Mammary epithelial cell (primary cell): ENCODE measurements at regions of chr5 and their contacts with region 1.

Region 1: DNA sequence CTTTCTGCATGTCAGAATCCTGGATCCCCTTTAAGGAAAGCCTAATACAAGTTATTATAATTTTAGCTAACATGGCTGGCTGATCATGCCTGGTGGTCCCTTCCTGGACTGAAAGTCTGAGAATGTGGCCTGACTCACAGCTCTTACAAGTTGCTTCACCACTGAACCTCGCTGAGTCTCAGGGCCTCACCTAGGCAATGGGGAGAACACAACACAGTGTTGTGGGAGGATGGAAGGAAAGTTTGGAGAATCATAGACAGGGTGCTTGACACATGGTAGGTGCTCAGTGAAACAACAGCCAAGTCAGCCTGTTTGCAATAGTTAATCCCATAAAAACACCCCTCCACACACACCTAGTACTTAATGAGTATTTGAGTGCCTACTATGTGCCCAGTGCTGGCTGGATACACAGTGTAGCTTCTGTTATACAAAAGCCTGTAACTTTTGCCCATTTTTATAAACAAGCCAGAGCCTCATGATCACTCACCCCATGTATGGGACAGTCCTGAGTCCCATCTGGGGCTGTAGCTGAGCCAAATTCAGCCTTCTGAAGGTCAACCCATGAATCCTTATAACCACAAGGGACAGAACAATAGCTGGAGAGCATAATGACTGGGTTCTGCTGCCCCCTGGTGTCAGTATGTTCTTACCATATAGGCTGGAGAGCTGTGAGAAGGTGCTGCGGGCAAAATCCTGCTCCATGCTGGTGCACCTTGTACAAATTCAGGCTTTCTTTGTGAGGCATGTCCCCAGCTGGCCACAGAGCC is 3.9 kb downstream of the ACSL6 start:
- DNase-seq: peak; percentile 71
- H3K4me3 ChIP-seq: no peak overlapping the region
- H3K27ac ChIP-seq: no peak overlapping the region
- H3K4me1 ChIP-seq: peaks cover 17% of the 10 kb centered on the region
- H3K27me3 ChIP-seq: peaks cover 7% of the 10 kb centered on the region
- CTCF ChIP-seq: peak; percentile 71 to 80

Region 2: GRCh38 chr5:131423056-131423455 is 584.5 kb before region 1 on chr5:
- CTCF ChIA-PET with region 1: interaction called, 5 read pairs
- dilution Hi-C with region 1: no loop called
- in situ Hi-C with region 1: no loop called
- intact Hi-C with region 1: loop called (anchors 1 kb)
- DNase-seq: no peak
- H3K4me3 ChIP-seq: no peak overlapping the region
- H3K27ac ChIP-seq: no peak overlapping the region
- H3K4me1 ChIP-seq: no peaks in the 10 kb centered on the region
- H3K27me3 ChIP-seq: no peaks in the 10 kb centered on the region
- CTCF ChIP-seq: peak; percentile 26 to 33

Region 3: DNA sequence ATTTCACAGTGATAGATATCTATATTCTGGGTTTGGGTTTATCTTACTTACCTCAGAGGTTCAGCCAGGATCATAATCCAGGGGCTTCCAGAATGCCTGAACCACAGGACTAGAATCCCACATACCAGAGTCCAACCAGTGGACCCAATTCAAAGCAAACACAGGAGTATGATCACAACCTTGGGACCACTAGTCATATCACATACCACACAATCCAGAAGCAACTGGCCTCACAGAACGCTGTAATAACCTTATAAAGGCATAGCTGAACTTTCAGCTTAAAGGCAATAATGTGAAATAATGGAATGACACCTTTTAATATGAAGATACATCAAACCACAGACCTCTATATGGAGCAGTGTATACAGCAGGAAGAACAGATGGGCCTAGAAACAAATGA is 397.8 kb before region 1 on chr5:
- CTCF ChIA-PET with region 1: no interaction called
- dilution Hi-C with region 1: no loop called
- in situ Hi-C with region 1: loop called in 1 of 2 experiments (anchors 5 kb)
- intact Hi-C with region 1: no loop called
- DNase-seq: no peak
- H3K4me3 ChIP-seq: no peak overlapping the region
- H3K27ac ChIP-seq: no peak overlapping the region
- H3K4me1 ChIP-seq: peaks cover 17% of the 10 kb centered on the region
- H3K27me3 ChIP-seq: no peaks in the 10 kb centered on the region
- CTCF ChIP-seq: no peak

Region 4: GRCh38 chr5:131710391-131710790 is 297.2 kb before region 1 on chr5:
- CTCF ChIA-PET with region 1: no interaction called
- dilution Hi-C with region 1: no loop called
- in situ Hi-C with region 1: no loop called
- intact Hi-C with region 1: loop called (anchors 10 kb)
- DNase-seq: no peak
- H3K4me3 ChIP-seq: no peak overlapping the region
- H3K27ac ChIP-seq: no peak overlapping the region
- H3K4me1 ChIP-seq: no peaks in the 10 kb centered on the region
- H3K27me3 ChIP-seq: no peaks in the 10 kb centered on the region
- CTCF ChIP-seq: no peak

Region 5: DNA sequence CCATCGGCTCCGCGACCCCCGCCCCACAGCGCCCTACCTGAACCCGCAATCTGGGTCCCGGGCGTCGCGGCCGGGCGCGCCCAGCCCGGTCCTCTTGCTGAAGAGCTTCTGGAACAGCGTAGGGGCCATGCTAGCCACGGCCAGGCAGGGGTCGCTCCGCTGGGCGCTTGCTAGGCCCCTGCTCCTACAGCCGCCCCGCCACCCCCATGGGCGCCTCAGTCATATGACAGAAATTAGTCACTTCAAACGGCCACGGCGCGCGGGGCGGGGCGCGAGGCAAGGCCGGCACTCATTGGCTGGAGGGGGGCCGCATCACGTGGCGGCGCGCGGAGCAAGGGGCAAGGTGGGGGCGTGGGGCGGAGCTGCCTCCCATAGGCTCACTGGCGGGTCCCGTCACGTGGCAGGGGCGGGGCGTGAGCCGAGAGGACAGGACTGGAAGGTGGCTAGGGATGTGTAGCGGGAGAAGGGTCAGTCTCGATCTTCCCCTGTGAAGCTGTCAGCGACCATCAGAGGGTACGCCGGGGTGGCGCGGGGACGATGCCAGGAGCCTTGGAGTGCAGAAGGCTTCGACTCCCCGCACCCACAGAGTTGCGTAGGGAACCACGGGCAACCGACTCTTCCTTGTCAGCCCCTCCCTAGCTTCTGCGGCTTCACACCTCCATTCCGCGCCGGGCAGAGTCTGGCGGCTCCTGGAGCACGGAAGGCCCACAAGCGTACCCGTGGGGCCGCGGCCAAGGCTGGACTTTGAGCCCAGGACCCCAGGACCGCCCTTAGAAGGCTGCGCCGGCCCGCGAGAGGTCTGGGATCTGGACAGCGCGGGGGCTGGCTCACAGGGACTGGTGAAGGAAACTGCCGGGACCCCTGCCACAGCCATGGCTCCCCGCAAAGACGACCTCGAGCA is 210.5 kb before region 1 on chr5 and contains the start of gene FNIP1:
- CTCF ChIA-PET with region 1: no interaction called
- dilution Hi-C with region 1: no loop called
- in situ Hi-C with region 1: loop called in 1 of 2 experiments (anchors 25 kb)
- intact Hi-C with region 1: loop called (anchors 5 kb)
- DNase-seq: peak; percentile 97
- H3K4me3 ChIP-seq: peak within 1 kb of the TSS; percentile 93 to 97 (median 94)
- H3K27ac ChIP-seq: peak within 1 kb of the TSS; percentile 91
- H3K4me1 ChIP-seq: peaks cover 13% of the 10 kb centered on the region
- H3K27me3 ChIP-seq: no peaks in the 10 kb centered on the region
- CTCF ChIP-seq: no peak
- total RNA-seq, gene FNIP1: 27.3 to 69.2 TPM

Region 6: DNA sequence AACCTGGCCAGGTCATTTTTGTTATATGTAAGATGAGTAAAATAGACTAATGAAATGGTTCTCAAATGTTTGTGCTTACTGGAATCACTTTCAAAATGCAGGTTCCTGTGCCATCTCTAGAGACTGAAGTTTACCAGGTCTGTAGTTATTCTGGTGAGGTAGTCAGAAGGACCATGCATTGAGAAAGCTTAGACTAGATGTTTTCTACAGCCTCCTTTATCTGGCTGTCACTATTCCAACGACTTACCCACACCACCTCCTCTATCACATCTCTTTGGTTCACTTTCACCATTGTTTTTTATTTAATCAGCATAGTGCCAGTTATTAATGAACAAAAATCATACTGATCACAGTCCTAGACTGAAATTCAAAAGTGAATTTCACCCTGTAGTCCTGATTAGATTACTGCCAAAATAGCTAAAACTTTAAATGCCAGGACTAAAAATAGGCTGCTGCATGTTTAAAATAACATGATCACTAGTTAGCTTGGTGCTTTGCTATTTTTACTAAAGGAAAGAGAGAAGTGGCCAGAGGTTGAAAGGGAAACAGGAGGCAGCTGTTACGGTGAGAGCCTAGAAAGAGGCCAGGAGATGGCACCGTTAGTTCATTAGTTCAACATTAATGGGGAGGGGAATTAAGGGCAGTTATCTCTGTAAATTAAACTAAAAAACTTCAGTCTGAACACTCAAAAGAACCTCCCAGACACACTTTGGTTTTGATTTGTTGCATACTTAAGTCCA is 196.9 kb before region 1 on chr5:
- CTCF ChIA-PET with region 1: interaction called, 10 read pairs
- dilution Hi-C with region 1: no loop called
- in situ Hi-C with region 1: loop called (anchors 5 to 25 kb)
- intact Hi-C with region 1: loop called (anchors 1 kb)
- DNase-seq: no peak
- H3K4me3 ChIP-seq: no peak overlapping the region
- H3K27ac ChIP-seq: no peak overlapping the region
- H3K4me1 ChIP-seq: peaks cover 10% of the 10 kb centered on the region
- H3K27me3 ChIP-seq: no peaks in the 10 kb centered on the region
- CTCF ChIP-seq: peak; percentile 40 to 47